ENCODE measurements at regions of chr17 and their contacts with region 1.

Region 1: GRCh38 chr17:50547035-50547735 is at the start of gene SPATA20:
- DNase-seq: peak; percentile 97
- H3K4me3 ChIP-seq: peak within 1 kb of the TSS; percentile 81
- H3K27ac ChIP-seq: 0 out of 2 replicates have a peak within 1 kb of the TSS, but pooled peaks have one; percentile 23
- H3K4me1 ChIP-seq: peaks cover 15% of the 10 kb centered on the region
- H3K27me3 ChIP-seq: no peaks in the 10 kb centered on the region
- total RNA-seq, gene SPATA20: 146 TPM in 2 replicates

Region 2: GRCh38 chr17:50697663-50698274 is 150.6 kb after region 1 on chr17:
- in situ Hi-C with region 1: loop called (anchors 5 kb)
- DNase-seq: no peak
- H3K4me3 ChIP-seq: no peak overlapping the region
- H3K27ac ChIP-seq: no peak overlapping the region
- H3K4me1 ChIP-seq: peaks cover 34% of the 10 kb centered on the region
- H3K27me3 ChIP-seq: no peaks in the 10 kb centered on the region

Measured in GM23248 (cell line).